Calu3 (cell line): ENCODE measurements at regions of chr12 and their contacts with region 1.

Region 1: DNA sequence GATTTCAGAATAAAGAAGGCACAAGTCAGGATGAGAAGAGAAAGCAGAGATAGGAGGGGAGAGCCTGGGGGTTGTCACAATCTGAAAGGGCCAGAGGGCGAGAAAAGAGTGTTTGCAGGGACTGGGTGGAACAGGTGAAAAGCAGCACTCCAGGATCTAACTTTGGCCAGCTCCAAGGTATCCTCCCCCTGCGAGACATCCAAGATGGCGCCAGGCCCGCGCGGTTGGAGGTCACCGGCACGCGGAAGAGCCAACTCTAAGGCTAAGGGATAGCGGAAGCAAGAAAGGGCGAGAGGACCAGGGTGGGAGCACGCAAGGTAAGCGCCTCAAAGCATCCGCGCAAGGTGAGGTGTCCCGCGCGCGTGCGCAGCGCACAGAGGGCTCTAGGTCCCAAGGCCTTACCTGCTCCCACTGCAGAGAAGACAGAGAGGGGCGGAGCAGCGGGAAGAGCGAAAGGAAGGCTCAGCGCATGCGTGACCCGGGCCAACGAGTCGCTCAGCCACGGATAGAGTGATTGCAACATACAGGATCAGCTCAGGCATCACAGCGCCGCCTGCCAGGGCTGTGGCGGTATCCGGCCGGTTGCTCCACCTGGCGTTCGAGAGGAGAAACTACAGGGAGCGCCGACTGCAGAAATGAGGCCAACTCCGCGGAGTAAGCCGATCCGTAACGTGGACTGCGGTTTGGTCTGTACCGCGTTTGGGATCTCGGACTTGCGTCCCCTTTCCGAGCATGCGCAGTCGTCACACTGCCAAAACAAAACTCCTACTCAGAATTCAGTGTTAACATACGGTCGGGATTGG is at the start of gene ATP5MC2:
- DNase-seq: peak; percentile 92
- H3K4me3 Mint-ChIP-seq: peak within 1 kb of the TSS; percentile 92
- H3K27ac Mint-ChIP-seq: peak within 1 kb of the TSS; percentile 96
- H3K4me1 Mint-ChIP-seq: no peaks in the 10 kb centered on the region
- H3K27me3 Mint-ChIP-seq: peaks cover 36% of the 10 kb centered on the region
- CTCF ChIP-seq: peak; percentile 81
- total RNA-seq, gene ATP5MC2: 169 and 173 TPM in 2 replicates

Region 2: GRCh38 chr12:53115112-53115890 is 560.6 kb before region 1 on chr12:
- CTCF ChIA-PET with region 1: no interaction called
- intact Hi-C with region 1: no loop called
- DNase-seq: no peak
- H3K4me3 Mint-ChIP-seq: no peak overlapping the region
- H3K27ac Mint-ChIP-seq: no peak overlapping the region
- H3K4me1 Mint-ChIP-seq: no peaks in the 10 kb centered on the region
- H3K27me3 Mint-ChIP-seq: peaks cover 19% of the 10 kb centered on the region
- CTCF ChIP-seq: no peak

Region 3: DNA sequence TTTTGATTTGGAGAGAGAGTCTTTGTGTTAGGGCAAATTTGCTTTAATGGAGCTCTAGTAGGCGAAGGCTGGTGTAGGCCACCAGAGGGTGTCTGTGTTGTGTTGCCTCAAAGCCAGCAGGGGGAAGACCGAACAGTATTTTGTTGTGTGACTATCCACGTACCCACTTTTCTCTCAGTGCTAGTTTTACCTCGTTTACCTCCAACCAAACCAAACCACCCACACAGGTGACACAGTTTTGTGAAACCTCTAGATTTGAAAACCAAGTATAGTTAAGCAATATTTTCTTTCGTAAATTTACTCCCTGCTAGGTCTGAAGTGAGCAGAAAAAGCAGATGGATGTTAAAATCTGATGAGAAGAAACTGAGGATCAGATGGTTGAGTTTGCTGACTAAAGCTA is 132.3 kb before region 1 on chr12:
- CTCF ChIA-PET with region 1: interaction called, 23 read pairs
- intact Hi-C with region 1: loop called (anchors 1 kb)
- DNase-seq: peak; percentile 40
- H3K4me3 Mint-ChIP-seq: no peak overlapping the region
- H3K27ac Mint-ChIP-seq: no peak overlapping the region
- H3K4me1 Mint-ChIP-seq: no peaks in the 10 kb centered on the region
- H3K27me3 Mint-ChIP-seq: no peaks in the 10 kb centered on the region
- CTCF ChIP-seq: peak; percentile 25

Region 4: DNA sequence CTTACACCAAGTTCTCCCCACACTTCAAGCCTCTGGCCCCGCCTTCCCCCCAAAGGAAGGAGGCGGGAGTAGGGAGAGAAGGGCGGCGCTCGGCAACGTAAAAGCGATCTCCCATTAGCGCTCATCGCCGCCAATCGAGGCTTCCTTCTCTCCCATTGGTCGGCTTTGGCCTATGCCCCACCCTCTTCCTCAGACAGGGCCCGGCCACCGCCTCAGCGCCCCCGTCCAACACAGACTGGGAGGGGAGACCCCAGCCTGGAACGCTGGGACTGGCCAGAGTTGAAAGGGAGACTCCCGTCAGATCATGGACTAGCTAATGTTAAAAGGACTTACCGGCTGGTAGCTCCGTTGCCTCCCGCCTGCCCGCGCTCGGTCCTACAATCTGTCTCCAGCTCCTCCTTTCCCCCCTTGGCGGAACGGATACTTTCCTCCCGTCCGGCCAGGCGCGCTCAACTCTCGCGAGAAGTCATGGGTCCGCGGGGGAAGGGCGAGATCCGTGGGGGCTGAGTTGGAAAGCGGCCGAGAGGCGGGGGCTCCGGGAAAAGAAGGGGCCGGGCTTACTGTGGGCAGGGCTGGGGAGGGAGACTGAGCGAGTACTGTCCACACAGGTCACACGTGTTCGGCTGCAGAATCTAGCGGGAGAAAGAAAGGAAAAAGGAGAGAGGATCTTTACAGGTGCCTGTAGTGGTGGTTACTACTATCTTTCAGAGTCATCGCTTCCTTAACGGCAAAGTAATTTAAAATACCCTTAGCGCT is 49.7 kb before region 1 on chr12 and contains the start of gene ATF7:
- CTCF ChIA-PET with region 1: interaction called, 6 read pairs
- intact Hi-C with region 1: loop called (anchors 10 kb)
- DNase-seq: peak; percentile 96
- H3K4me3 Mint-ChIP-seq: peak within 1 kb of the TSS; percentile 84
- H3K27ac Mint-ChIP-seq: peak within 1 kb of the TSS; percentile 83
- H3K4me1 Mint-ChIP-seq: peaks cover 16% of the 10 kb centered on the region
- H3K27me3 Mint-ChIP-seq: no peaks in the 10 kb centered on the region
- CTCF ChIP-seq: no peak
- total RNA-seq, gene ATF7: 18.0 and 24.9 TPM in 2 replicates